CD4-positive, alpha-beta T cell (primary cell): ENCODE measurements at regions of chr3 and their contacts with region 1.

Region 1: DNA sequence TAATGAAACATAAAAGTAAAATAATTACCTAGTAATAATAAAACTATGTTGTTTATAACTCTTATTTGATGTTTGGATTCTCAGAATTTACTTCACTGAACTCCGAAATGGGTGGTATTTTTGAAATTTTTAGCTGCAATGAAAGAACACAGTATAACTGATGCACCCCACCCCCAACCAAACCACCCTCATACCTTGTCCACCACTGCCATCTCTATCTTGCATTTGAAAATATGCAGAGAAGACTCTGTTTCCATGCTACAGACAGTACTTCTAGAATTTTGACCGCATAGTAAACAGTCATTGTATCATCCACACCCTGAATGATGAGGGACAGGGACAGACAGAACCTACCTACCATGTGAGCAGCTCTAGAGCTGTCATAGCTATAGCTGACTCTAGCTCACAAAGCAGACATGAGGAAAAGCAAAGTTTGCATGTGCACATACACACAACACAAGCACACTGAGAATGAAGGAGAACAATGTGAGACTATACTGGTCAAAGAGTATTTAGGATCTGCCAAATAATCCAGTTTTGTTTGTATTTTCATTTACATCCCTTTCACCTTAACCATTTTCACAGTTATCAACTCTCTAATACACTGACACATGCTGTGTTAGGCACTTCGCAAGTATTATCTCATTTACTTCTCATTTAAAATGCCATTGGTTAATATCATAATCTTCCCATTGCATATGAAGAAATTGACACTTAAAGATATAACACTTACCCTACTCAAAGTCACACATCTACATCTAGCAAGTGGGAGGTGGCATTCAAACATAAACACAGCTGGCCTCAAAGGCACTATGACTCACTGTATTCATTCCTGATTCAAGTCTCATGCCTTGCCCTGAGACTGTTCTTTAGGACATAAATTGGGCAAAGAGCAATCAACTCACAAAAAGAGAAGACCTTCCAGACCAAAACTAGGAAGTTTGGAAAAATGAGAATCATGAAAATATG is 1014.7 kb upstream of the CFAP20DC start:
- DNase-seq: peak in 4 of 14 experiments; percentile 36 to 53 (median 43)
- ATAC-seq: peak; percentile 83
- H3K4me3 ChIP-seq: no peak overlapping the region
- H3K4me3 Mint-ChIP-seq: peak overlapping the region; percentile 67
- H3K27ac ChIP-seq: peak overlapping the region; percentile 25 to 67
- H3K27ac Mint-ChIP-seq: peak overlapping the region; percentile 88
- H3K4me1 ChIP-seq: peaks cover 10% of the 10 kb centered on the region
- H3K4me1 Mint-ChIP-seq: peaks cover 80% of the 10 kb centered on the region
- H3K27me3 ChIP-seq: no peaks in the 10 kb centered on the region
- H3K27me3 Mint-ChIP-seq: no peaks in the 10 kb centered on the region
- CTCF ChIP-seq: no peak

Region 2: GRCh38 chr3:59895972-59896371 is 168.5 kb before region 1 on chr3:
- CTCF ChIA-PET with region 1: no interaction called
- POLR2A ChIA-PET with region 1: no interaction called
- intact Hi-C with region 1: loop called in 1 of 2 experiments (anchors 5 kb)
- DNase-seq: no peak
- ATAC-seq: no peak
- H3K4me3 ChIP-seq: no peak overlapping the region
- H3K4me3 Mint-ChIP-seq: no peak overlapping the region
- H3K27ac ChIP-seq: no peak overlapping the region
- H3K27ac Mint-ChIP-seq: peak overlapping the region; percentile 28
- H3K4me1 ChIP-seq: peaks cover 5% of the 10 kb centered on the region
- H3K4me1 Mint-ChIP-seq: peaks cover 71% of the 10 kb centered on the region
- H3K27me3 ChIP-seq: no peaks in the 10 kb centered on the region
- H3K27me3 Mint-ChIP-seq: no peaks in the 10 kb centered on the region
- CTCF ChIP-seq: no peak

Region 3: GRCh38 chr3:59920822-59921221 is 143.7 kb before region 1 on chr3:
- CTCF ChIA-PET with region 1: no interaction called
- POLR2A ChIA-PET with region 1: no interaction called
- intact Hi-C with region 1: no loop called
- DNase-seq: no peak
- ATAC-seq: no peak
- H3K4me3 ChIP-seq: no peak overlapping the region
- H3K4me3 Mint-ChIP-seq: no peak overlapping the region
- H3K27ac ChIP-seq: no peak overlapping the region
- H3K27ac Mint-ChIP-seq: no peak overlapping the region
- H3K4me1 ChIP-seq: peaks cover 8% of the 10 kb centered on the region
- H3K4me1 Mint-ChIP-seq: peaks cover 76% of the 10 kb centered on the region
- H3K27me3 ChIP-seq: no peaks in the 10 kb centered on the region
- H3K27me3 Mint-ChIP-seq: no peaks in the 10 kb centered on the region
- CTCF ChIP-seq: no peak

Region 4: GRCh38 chr3:60053526-60054265 is 10.8 kb before region 1 on chr3:
- CTCF ChIA-PET with region 1: no interaction called
- POLR2A ChIA-PET with region 1: interaction called, 8 read pairs
- intact Hi-C with region 1: loop called in 1 of 2 experiments (anchors 1 kb)
- DNase-seq: peak in 6 of 14 experiments; percentile 20 to 70 (median 34)
- ATAC-seq: no peak
- H3K4me3 ChIP-seq: no peak overlapping the region
- H3K4me3 Mint-ChIP-seq: peak overlapping the region; percentile 50
- H3K27ac ChIP-seq: no peak overlapping the region
- H3K27ac Mint-ChIP-seq: peak overlapping the region; percentile 91
- H3K4me1 ChIP-seq: peaks cover 14% of the 10 kb centered on the region
- H3K4me1 Mint-ChIP-seq: peaks cover 88% of the 10 kb centered on the region
- H3K27me3 ChIP-seq: no peaks in the 10 kb centered on the region
- H3K27me3 Mint-ChIP-seq: no peaks in the 10 kb centered on the region
- CTCF ChIP-seq: no peak

Region 5: DNA sequence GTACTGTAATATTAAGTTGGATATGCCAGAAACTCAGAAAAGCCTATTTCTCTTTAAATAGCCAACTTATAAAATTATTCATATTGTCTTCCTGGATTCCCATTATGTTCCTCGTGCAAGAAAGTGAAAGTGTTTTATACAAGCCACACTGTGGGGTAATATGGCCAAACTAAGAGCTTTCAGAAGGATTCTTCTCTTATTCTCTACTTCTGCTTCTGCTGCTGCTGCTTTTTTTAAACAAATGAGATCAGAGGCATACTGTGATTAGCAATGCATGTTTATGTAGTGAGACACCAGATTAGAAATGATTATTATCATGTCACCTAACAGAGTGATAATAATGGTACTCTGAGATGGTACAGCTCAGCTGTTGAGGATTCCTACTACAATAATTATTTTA is 11.8 kb after region 1 on chr3:
- CTCF ChIA-PET with region 1: interaction called, 4 read pairs
- POLR2A ChIA-PET with region 1: interaction called, 21 read pairs
- intact Hi-C with region 1: loop called in 1 of 2 experiments (anchors 2 kb)
- DNase-seq: no peak
- ATAC-seq: no peak
- H3K4me3 ChIP-seq: peak overlapping the region; percentile 54
- H3K4me3 Mint-ChIP-seq: peak overlapping the region; percentile 75
- H3K27ac ChIP-seq: no peak overlapping the region
- H3K27ac Mint-ChIP-seq: peak overlapping the region; percentile 88
- H3K4me1 ChIP-seq: peaks cover 7% of the 10 kb centered on the region
- H3K4me1 Mint-ChIP-seq: peaks cover 77% of the 10 kb centered on the region
- H3K27me3 ChIP-seq: no peaks in the 10 kb centered on the region
- H3K27me3 Mint-ChIP-seq: no peaks in the 10 kb centered on the region
- CTCF ChIP-seq: no peak

Region 6: GRCh38 chr3:60126511-60127304 is 62.2 kb after region 1 on chr3:
- CTCF ChIA-PET with region 1: no interaction called
- POLR2A ChIA-PET with region 1: no interaction called
- intact Hi-C with region 1: no loop called
- DNase-seq: no peak
- ATAC-seq: no peak
- H3K4me3 ChIP-seq: no peak overlapping the region
- H3K4me3 Mint-ChIP-seq: no peak overlapping the region
- H3K27ac ChIP-seq: no peak overlapping the region
- H3K27ac Mint-ChIP-seq: no peak overlapping the region
- H3K4me1 ChIP-seq: no peaks in the 10 kb centered on the region
- H3K4me1 Mint-ChIP-seq: peaks cover 8% of the 10 kb centered on the region
- H3K27me3 ChIP-seq: no peaks in the 10 kb centered on the region
- H3K27me3 Mint-ChIP-seq: no peaks in the 10 kb centered on the region
- CTCF ChIP-seq: no peak